Activated CD4-positive, alpha-beta T cell treated with anti-CD3 and anti-CD28 coated beads, Interleukin-2, amount 10 ng/mL, durations not matched to agents 7 days and 5 days (primary cell): ENCODE measurements at regions of chr11 and their contacts with region 1.

Region 1: DNA sequence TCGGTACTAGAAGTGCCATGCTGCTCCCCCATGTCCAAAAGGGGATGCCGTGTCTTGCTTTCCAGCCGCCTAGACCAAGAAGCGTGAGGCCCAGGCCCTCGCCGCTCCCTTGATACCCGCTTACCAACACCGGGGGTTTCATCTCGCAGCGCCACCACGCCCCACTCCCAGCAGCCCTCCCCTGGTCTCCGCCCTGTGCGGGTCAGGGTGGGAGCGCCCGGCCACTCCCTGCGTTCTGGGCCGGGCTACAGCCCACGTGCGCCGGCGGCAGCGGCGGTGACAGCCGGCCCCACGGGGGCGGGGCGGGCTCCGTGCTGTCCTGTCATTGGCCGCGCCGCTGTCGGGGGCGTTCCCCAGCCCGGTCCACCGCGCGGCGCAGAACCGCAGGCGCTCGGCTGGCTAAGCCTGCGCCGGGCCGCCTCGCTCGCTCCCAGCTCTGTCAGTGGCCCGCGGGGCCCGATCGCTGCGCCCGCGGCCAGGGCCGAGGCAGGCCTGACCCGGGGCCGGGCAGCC is at the start of gene MICAL2:
- DNase-seq: peak; percentile 85
- H3K4me3 Mint-ChIP-seq: peak within 1 kb of the TSS; percentile 75
- H3K27ac Mint-ChIP-seq: peak within 1 kb of the TSS; percentile 87
- H3K4me1 Mint-ChIP-seq: peaks cover 48% of the 10 kb centered on the region
- H3K27me3 Mint-ChIP-seq: no peaks in the 10 kb centered on the region
- total RNA-seq, gene MICAL2: 45.5 to 47.3 TPM

Region 2: DNA sequence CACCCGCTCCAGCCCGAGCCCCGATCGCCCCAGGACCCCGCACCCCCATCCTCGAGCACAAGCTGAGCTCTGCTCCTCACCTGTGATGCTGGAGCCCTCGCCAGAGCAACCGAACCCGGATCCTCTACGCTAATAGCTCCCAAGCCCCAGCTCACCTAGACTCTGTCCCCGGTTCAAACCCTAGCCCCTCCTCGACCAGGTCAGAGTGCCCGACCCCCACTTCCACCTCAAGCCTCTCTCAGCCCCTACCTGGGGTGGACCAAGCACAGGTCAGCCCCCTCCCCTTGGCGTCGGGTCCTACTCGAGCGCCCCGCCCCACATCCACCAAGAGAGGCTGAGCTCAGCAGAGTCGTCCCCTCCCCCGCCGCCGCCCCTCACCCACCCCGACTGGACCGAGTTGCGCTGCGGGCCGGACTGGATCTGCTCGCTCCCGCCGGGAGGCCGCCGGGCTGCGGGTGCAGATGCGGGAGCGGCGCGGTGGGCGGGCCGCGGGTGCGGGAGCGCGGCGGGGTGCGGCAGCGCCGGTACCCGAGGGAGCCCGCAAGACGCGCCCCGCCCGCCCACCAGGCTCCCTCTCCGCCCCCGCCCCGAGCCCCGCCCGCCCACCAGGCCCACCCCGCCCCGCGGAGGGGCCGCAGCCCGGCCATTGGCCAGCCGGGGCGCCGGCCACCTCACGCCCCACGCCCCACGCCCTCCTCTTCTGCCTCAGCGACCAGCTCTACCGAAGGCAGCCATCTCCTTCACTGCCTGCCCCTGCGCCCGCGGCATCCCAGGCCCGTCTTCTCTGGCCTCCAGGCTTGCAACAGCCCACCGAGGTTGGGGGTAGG is 101.3 kb before region 1 on chr11:
- CTCF ChIA-PET with region 1: no interaction called
- POLR2A ChIA-PET with region 1: no interaction called
- DNase-seq: no peak
- H3K4me3 Mint-ChIP-seq: peak overlapping the region; percentile 47
- H3K27ac Mint-ChIP-seq: no peak overlapping the region
- H3K4me1 Mint-ChIP-seq: peaks cover 11% of the 10 kb centered on the region
- H3K27me3 Mint-ChIP-seq: peaks cover 84% of the 10 kb centered on the region

Region 3: DNA sequence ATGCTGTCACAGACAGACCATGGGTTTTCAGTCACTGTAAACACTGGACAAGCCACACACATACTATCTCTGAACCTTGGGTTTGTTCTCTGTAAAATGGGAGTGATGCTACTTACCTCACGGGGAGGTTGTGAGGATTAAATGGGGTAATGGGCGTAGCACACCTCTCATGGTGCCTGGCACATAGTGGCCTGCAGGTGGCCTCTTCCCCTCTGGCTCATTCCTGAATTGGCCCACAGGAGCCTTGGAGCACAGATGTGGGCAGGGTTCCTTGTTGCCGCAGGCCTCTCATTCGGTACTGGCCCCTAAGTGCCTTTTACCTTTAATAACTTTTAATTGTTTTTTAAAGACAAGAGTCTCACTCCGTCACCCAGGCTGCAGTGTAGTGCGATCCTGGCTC is 11.8 kb after region 1 on chr11:
- CTCF ChIA-PET with region 1: interaction called, 10 read pairs
- POLR2A ChIA-PET with region 1: no interaction called
- DNase-seq: no peak
- H3K4me3 Mint-ChIP-seq: no peak overlapping the region
- H3K27ac Mint-ChIP-seq: no peak overlapping the region
- H3K4me1 Mint-ChIP-seq: peaks cover 76% of the 10 kb centered on the region
- H3K27me3 Mint-ChIP-seq: no peaks in the 10 kb centered on the region

Region 4: GRCh38 chr11:12377824-12378593 is 267.8 kb after region 1 on chr11:
- CTCF ChIA-PET with region 1: no interaction called
- POLR2A ChIA-PET with region 1: no interaction called
- DNase-seq: no peak
- H3K4me3 Mint-ChIP-seq: peak overlapping the region; percentile 47
- H3K27ac Mint-ChIP-seq: no peak overlapping the region
- H3K4me1 Mint-ChIP-seq: peaks cover 3% of the 10 kb centered on the region
- H3K27me3 Mint-ChIP-seq: peaks cover 52% of the 10 kb centered on the region